ENCODE measurements at regions of chr12 and their contacts with region 1.

Region 1: DNA sequence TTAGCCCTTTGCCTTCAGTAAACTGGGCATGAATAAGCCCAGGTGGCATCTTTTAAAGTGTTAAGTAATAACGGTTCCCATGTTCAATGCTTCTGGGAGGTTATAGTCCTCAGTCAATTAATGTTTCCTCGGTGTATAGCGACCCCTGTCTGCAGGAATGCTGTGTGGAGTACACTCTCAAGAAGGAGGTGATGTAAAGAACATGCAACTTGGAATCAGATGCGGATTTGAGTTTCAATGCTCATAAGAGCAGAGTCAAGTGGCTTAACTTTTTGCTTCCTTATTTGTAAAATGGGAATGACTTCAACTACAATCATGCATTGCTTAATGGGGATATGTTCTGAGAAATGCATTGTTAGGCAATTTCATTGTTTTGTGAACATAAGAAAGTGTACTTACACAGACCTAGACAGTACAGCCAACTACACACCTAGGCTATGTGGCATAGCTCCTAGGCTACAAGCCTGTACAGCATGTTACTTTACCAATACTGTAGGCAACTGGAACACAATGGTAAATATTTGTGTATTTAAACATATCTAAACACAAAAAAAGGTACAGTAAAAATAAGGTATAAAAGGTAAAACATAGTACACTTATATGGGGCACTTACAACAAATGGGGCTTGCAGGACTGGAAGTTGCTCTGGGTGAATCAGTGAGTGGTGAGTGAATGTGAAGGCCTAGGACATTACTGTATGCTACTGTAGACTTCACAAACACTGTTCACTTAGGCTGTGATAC is 6.8 kb upstream of the MRPS35 start:
- DNase-seq: peak in 1 of 2 donors; percentile 65
- ATAC-seq: peak; percentile 57 to 86 (median 82)
- H3K4me3 ChIP-seq: no peak overlapping the region
- H3K27ac ChIP-seq: no peak overlapping the region
- H3K4me1 ChIP-seq: peaks cover 0 to 11% (median 0%) of the 10 kb centered on the region in 9 donors
- H3K27me3 ChIP-seq: no peaks in the 10 kb centered on the region
- CTCF ChIP-seq: peak; percentile 59 to 91 (median 83)

Region 2: GRCh38 chr12:27024291-27024690 is 679.6 kb before region 1 on chr12:
- intact Hi-C with region 1: loop called in 1 of 10 experiments (anchors 10 kb)
- DNase-seq: no peak
- ATAC-seq: no peak
- H3K4me3 ChIP-seq: peak overlapping the region in 2 of 10 donors; percentile 62 to 79
- H3K27ac ChIP-seq: no peak overlapping the region
- H3K4me1 ChIP-seq: peaks cover 6 to 34% (median 18%) of the 10 kb centered on the region in 9 donors
- H3K27me3 ChIP-seq: no peaks in the 10 kb centered on the region
- CTCF ChIP-seq: no peak